Aorta (tissue), 5 donors: ENCODE measurements at regions of chr1 and their contacts with region 1.

Region 1: GRCh38 chr1:32063261-32063681 is 9.5 kb upstream of the TMEM39B start:
- DNase-seq: no peak
- ATAC-seq: peak; percentile 78
- H3K4me3 ChIP-seq: no peak overlapping the region
- H3K27ac ChIP-seq: peak overlapping the region; percentile 84 to 92
- H3K4me1 ChIP-seq: peaks cover 2 to 5% of the 10 kb centered on the region in 2 donors
- H3K27me3 ChIP-seq: no peaks in the 10 kb centered on the region

Region 2: DNA sequence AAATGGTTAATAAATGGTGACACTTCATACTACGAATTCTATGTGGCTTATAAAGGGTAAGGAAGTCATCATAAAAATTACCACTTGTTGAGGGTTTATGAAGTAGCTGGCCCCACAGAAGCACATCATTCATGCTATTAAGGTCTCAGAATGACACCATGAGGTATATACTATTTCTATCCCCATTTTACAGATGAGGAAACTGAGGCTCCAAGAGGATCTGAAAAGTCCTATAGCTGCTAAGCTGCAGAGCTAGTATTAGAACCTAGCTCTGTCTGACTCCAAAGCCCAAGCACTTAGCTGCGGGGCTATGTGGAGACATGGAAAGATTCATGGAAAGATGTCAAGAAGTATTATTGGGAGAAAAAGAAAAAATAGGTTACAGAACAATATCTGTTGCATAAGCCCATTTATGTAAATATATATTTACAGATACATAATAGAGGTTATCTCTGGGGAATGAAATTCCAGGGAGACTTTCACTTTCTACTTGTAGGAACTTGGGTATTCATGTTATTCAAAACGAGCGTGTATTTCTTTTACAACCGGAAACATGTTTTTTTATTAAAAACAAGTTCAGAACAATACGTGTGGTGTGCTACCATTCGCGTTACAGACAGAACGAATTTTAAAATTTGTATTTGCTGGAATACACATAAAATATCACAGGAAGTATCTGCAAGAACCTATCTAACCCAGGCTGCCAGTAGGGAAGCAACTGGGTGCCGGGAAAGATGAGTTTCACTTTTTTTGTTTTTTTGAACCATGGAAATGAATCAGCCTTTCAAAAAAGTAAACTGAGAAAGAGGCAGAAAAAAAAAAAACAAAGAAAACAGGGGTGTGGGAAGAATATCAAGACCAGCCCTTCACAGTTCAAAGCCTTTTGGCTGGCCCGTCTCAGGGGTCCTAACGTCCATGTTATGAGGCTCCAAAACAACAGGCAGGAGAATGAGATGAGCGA is 260.8 kb before region 1 on chr1:
- intact Hi-C with region 1: loop called in 1 of 2 experiments (anchors 10 kb)
- DNase-seq: no peak
- ATAC-seq: no peak
- H3K4me3 ChIP-seq: peak overlapping the region in 1 of 2 donors; percentile 20
- H3K27ac ChIP-seq: no peak overlapping the region
- H3K4me1 ChIP-seq: no peaks in the 10 kb centered on the region
- H3K27me3 ChIP-seq: no peaks in the 10 kb centered on the region

Region 3: DNA sequence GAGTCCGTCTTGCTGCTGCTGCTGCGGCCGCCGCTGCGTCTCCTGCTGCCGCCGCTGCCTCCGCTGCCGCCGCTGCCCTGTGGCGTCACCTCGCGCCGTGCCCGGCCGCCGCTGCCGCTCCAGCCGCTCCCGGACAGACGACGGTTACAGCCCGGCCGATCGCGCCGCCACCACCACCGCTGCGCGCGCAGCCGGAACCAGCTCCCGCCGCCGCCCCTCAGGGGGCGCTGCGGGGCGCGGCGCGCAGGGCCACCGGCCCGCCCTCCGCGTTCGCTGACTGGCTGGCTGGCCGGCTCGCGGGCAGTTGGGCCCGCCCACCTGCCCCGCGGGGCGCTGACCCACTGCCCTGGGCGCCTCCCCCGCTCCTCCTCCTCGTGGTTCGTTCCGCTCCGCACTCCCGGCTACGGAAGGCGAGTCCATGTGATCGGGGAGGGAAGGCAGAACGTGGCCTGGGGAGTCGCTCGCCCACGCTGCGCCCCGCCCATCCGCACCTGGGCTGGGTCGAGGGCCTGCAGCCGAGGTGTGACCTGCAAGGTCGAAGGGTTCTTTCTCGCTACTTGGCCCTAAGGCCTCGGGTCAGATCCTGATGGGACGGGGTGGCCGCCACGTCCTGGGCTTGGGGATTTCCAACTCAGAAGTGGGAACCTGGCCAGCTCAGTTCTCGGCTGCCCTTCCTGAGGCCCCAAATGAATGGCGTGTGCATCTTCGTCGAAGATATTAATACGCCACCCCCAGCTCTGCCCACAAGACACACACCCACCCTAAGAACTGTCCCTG is 124.9 kb before region 1 on chr1 and contains the start of gene PTP4A2:
- intact Hi-C with region 1: loop called in 1 of 2 experiments (anchors 5 kb)
- DNase-seq: peak; percentile 96
- ATAC-seq: peak; percentile 97
- H3K4me3 ChIP-seq: peak within 1 kb of the TSS; percentile 79 to 90
- H3K27ac ChIP-seq: peak within 1 kb of the TSS; percentile 88 to 89
- H3K4me1 ChIP-seq: peaks cover 0 to 2% of the 10 kb centered on the region in 2 donors
- H3K27me3 ChIP-seq: no peaks in the 10 kb centered on the region
- total RNA-seq, gene PTP4A2: 230 to 244 TPM

Region 4: GRCh38 chr1:32013386-32014198 is 49.7 kb before region 1 on chr1 and contains the start of gene KHDRBS1:
- intact Hi-C with region 1: loop called (anchors 5 to 10 kb)
- DNase-seq: peak; percentile 99
- ATAC-seq: peak; percentile 98
- H3K4me3 ChIP-seq: peak within 1 kb of the TSS; percentile 82 to 85
- H3K27ac ChIP-seq: peak within 1 kb of the TSS; percentile 71 to 98
- H3K4me1 ChIP-seq: peaks cover 0 to 6% of the 10 kb centered on the region in 2 donors
- H3K27me3 ChIP-seq: no peaks in the 10 kb centered on the region
- total RNA-seq, gene KHDRBS1: 84.9 to 91.2 TPM